Mammary epithelial cell (primary cell): ENCODE measurements at regions of chr14 and their contacts with region 1.

Region 1: DNA sequence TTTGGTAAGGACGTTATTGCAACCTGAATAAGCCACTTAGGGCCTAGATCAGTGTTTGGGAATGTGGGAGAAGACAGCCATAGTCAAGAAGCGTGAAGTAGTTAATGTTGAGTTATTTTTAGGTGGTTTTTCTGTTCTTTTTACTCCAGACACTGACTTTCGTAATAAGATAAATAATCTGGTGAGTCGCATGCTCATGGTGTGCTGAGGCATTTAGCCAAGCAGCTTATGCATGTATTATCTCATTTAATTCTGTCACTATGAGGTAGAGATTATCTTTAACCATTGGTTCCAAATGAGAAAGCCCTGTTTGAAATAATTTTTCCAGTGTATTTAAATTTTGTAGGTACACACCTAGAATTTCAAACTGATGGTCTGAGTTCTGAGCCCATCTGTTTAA is 67.3 kb downstream of the RCOR1 start:
- DNase-seq: peak; percentile 63
- H3K4me3 ChIP-seq: no peak overlapping the region
- H3K27ac ChIP-seq: no peak overlapping the region
- H3K4me1 ChIP-seq: peaks cover 19% of the 10 kb centered on the region
- H3K27me3 ChIP-seq: no peaks in the 10 kb centered on the region
- CTCF ChIP-seq: no peak

Region 2: DNA sequence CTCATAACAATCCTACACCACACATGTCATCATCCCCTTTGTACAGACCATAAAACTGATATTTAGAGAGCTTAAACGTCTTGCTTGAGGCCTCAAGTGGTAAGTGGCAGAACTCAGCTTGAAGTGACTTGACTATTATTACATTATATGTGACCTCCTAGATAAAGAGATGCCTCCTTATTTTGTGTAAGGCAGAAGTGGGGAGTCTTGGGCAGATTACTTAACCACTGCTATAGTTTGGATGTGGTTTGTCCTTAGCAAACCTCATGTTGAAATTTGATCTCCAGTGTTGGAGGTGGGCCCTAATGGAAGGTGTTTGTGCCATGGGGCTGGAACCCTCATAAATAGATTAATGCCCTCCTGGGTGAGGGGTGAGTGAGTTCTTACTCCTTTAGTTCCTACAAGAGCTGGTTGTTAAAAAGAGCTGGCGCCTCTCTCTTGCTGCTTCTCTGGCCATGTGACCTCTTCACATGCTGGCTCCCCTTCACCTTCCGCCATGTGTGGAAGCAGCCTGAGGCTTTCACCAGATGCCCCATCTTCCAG is 29.9 kb before region 1 on chr14:
- CTCF ChIA-PET with region 1: no interaction called
- dilution Hi-C with region 1: loop called (anchors 5 kb)
- in situ Hi-C with region 1: no loop called
- intact Hi-C with region 1: no loop called
- DNase-seq: no peak
- H3K4me3 ChIP-seq: no peak overlapping the region
- H3K27ac ChIP-seq: no peak overlapping the region
- H3K4me1 ChIP-seq: no peaks in the 10 kb centered on the region
- H3K27me3 ChIP-seq: no peaks in the 10 kb centered on the region
- CTCF ChIP-seq: no peak

Region 3: DNA sequence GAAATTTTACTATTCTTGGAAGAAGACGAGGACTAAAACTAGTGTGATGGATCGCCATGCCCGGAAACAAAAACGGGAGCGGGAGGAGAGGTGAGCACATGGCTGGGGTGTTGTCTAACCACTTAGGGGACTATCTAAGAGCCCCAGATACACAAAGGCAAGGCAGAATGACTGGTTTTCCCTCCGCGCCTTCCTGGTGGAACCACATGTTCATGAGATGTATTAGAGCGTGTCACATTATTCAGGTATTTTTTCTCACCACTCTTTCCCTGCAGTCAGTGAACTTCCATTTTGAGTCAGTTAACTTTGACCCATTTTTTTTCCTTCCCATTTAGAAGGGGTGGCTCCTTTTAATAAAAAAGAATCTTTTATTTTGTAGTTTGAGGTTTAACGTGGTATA is 48.7 kb after region 1 on chr14:
- CTCF ChIA-PET with region 1: no interaction called
- dilution Hi-C with region 1: no loop called
- in situ Hi-C with region 1: no loop called
- intact Hi-C with region 1: no loop called
- DNase-seq: no peak
- H3K4me3 ChIP-seq: no peak overlapping the region
- H3K27ac ChIP-seq: no peak overlapping the region
- H3K4me1 ChIP-seq: no peaks in the 10 kb centered on the region
- H3K27me3 ChIP-seq: no peaks in the 10 kb centered on the region
- CTCF ChIP-seq: no peak